K562 (cell line): ENCODE measurements at regions of chr1 and their contacts with region 1.

Region 1: DNA sequence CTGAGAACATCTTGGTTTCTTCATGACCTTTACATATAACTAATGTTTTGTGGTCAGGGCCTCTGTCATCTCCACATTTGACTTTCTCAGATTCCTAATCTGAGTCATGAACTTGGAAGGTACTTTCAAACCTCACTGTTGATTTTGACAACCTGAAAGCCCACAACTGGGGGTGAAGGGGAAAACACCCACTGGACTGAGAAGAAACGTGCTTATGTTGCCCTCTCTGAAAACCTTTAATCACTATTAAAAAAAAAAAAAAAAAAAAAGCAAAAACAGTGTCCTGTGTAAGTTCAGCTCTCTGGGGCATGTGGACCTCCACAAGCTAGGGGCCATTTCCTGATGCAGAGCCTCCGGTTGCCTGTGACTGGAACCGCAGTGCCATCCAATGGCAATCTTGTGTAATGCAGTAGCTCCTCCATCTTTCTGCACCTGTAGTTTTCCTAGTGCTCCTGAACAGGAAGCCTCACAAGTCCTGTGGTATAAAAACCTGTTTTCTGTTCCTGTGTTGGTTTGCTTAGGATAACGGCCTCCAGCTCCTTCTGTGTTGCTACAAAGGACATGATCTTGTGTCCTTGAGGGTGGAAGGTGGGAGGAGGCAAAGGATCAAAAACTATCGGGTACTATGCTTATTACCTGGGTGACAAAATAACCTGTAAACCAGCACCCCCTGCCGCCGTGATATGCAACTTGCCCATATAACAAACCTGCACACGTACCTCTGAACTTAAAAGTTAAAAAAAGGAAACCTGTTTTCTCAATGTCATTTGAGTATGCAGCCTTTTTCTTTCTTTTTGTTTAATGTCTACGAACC is 124.5 kb downstream of the ZNF648 start:
- DNase-seq: peak; percentile 72 to 82 (median 76)
- ATAC-seq: peak; percentile 98
- H3K4me3 ChIP-seq: no peak overlapping the region
- H3K27ac ChIP-seq: no peak overlapping the region
- H3K4me1 ChIP-seq: no peaks in the 10 kb centered on the region
- H3K27me3 ChIP-seq: no peaks in the 10 kb centered on the region
- CTCF ChIP-seq: peak; percentile 85 to 95 (median 88)
- EP300 ChIP-seq: no peak
- POLR2A ChIP-seq: no peak
- RAD21 ChIP-seq: peak; percentile 89 to 96

Region 2: GRCh38 chr1:181189691-181190363 is 747.1 kb before region 1 on chr1:
- CTCF ChIA-PET with region 1: interaction called, 3 read pairs
- POLR2A ChIA-PET with region 1: no interaction called
- in situ Hi-C with region 1: no loop called
- intact Hi-C with region 1: loop called (anchors 1 kb)
- DNase-seq: peak; percentile 82 to 96 (median 92)
- ATAC-seq: peak; percentile 98
- H3K4me3 ChIP-seq: peak overlapping the region; percentile 22; the same call in 1 of the 2 replicates
- H3K27ac ChIP-seq: no peak overlapping the region
- H3K4me1 ChIP-seq: peaks cover 0 to 7% of the 10 kb centered on the region in 2 experiments; a peak in 3 of 5 replicates
- H3K27me3 ChIP-seq: peaks cover 8 to 36% of the 10 kb centered on the region in 2 experiments
- CTCF ChIP-seq: peak; percentile 97 to 98 (median 98)
- EP300 ChIP-seq: no peak
- POLR2A ChIP-seq: no peak
- RAD21 ChIP-seq: peak; percentile 89 to 96

Region 3: GRCh38 chr1:181479137-181479745 is 457.7 kb before region 1 on chr1:
- CTCF ChIA-PET with region 1: interaction called, 28 read pairs
- POLR2A ChIA-PET with region 1: interaction called, 4 read pairs
- in situ Hi-C with region 1: loop called (anchors 5 kb)
- intact Hi-C with region 1: loop called (anchors 1 kb)
- DNase-seq: peak; percentile 70 to 73 (median 71)
- ATAC-seq: peak; percentile 92
- H3K4me3 ChIP-seq: no peak overlapping the region
- H3K27ac ChIP-seq: no peak overlapping the region
- H3K4me1 ChIP-seq: peaks cover 0 to 10% of the 10 kb centered on the region in 2 experiments; a peak in 2 of 5 replicates
- H3K27me3 ChIP-seq: peaks cover 16 to 32% of the 10 kb centered on the region in 2 experiments
- CTCF ChIP-seq: peak; percentile 73 to 89 (median 89)
- EP300 ChIP-seq: no peak
- POLR2A ChIP-seq: no peak
- RAD21 ChIP-seq: peak; percentile 88 to 91

Region 4: GRCh38 chr1:181676269-181676668 is 260.7 kb before region 1 on chr1:
- CTCF ChIA-PET with region 1: no interaction called
- POLR2A ChIA-PET with region 1: no interaction called
- in situ Hi-C with region 1: no loop called
- intact Hi-C with region 1: loop called (anchors 2 kb)
- DNase-seq: peak; percentile 25 to 48 (median 28)
- ATAC-seq: peak; percentile 75
- H3K4me3 ChIP-seq: no peak overlapping the region
- H3K27ac ChIP-seq: no peak overlapping the region
- H3K4me1 ChIP-seq: no peaks in the 10 kb centered on the region
- H3K27me3 ChIP-seq: peaks cover 0 to 12% of the 10 kb centered on the region in 2 experiments; a peak in 1 of 5 replicates
- CTCF ChIP-seq: peak; percentile 30 to 50 (median 36); a peak in 2 of 6 replicates
- EP300 ChIP-seq: no peak
- POLR2A ChIP-seq: no peak
- RAD21 ChIP-seq: peak; percentile 9 to 49; a peak in 3 of 4 replicates

Region 5: DNA sequence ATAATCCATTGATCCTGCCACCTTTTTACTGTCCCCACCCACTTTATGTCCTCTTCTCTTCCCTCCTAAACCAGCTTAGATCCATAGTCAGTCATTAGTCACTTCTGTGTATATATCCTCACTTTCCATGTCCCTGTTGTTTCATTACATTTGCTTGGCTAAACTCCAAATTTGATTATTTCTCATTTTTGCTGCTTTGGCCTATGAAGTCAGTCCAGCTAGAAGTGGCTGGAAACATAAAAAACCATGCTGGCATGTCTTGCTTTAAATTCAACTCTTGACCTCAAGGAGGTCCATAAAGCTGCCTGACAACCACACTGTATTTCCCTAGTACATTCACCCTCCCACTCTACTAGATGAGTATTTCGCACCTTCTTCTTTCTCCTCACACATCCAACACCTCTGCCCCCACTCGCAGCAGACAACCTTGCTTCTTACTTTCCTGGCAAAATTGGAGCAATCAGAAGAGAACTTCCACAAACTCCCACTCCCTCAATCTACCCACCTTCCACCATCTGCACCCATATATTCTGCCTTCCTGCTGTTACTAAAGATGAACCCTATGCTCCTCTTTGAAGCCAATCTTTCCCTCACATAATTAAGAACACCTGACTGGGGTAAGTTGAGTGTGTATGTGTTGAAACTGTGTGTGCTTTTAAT is 52.4 kb after region 1 on chr1:
- CTCF ChIA-PET with region 1: no interaction called
- POLR2A ChIA-PET with region 1: no interaction called
- in situ Hi-C with region 1: no loop called
- intact Hi-C with region 1: no loop called
- DNase-seq: no peak
- ATAC-seq: no peak
- H3K4me3 ChIP-seq: no peak overlapping the region
- H3K27ac ChIP-seq: no peak overlapping the region
- H3K4me1 ChIP-seq: no peaks in the 10 kb centered on the region
- H3K27me3 ChIP-seq: peaks cover 0 to 11% of the 10 kb centered on the region in 2 experiments; a peak in 2 of 5 replicates
- CTCF ChIP-seq: no peak
- EP300 ChIP-seq: no peak
- POLR2A ChIP-seq: no peak
- RAD21 ChIP-seq: no peak

Region 6: GRCh38 chr1:182054698-182055326 is 117.8 kb after region 1 on chr1:
- CTCF ChIA-PET with region 1: no interaction called
- POLR2A ChIA-PET with region 1: no interaction called
- in situ Hi-C with region 1: no loop called
- intact Hi-C with region 1: loop called (anchors 5 kb)
- DNase-seq: peak; percentile 47 to 70 (median 51)
- ATAC-seq: peak; percentile 85
- H3K4me3 ChIP-seq: no peak overlapping the region
- H3K27ac ChIP-seq: no peak overlapping the region
- H3K4me1 ChIP-seq: peaks cover 0 to 12% of the 10 kb centered on the region in 2 experiments; a peak in 1 of 5 replicates
- H3K27me3 ChIP-seq: peaks cover 27 to 30% of the 10 kb centered on the region in 2 experiments
- CTCF ChIP-seq: peak; percentile 59 to 79 (median 69); a peak in 5 of 6 replicates
- EP300 ChIP-seq: no peak
- POLR2A ChIP-seq: no peak
- RAD21 ChIP-seq: peak; percentile 61 to 77